ENCODE measurements at regions of chr18 and their contacts with region 1.

Region 1: DNA sequence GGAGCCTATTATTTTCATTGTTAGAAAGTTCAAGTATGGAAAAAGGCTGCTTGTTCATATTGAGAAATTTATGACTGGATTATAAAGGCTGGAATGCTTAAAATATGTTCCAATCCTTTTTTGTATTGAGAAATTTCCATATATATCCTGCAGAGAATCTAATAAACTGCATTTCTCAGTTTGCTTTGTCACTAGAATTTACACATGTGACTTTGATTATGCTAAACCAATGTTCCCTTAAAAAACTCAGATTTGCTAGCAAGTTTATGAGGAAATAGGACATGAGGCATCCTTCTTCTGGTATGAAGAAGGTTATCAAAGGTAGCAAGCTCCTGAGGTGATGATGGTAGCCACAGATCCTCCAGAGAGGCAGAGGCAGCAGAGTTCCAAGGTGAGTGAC is 29.2 kb upstream of the DSEL start:
- DNase-seq: no peak
- H3K4me3 ChIP-seq: no peak overlapping the region
- H3K27ac ChIP-seq: no peak overlapping the region
- H3K27me3 ChIP-seq: no peaks in the 10 kb centered on the region
- CTCF ChIP-seq: no peak

Region 2: GRCh38 chr18:67568166-67568565 is 22.5 kb after region 1 on chr18:
- CTCF ChIA-PET with region 1: no interaction called
- POLR2A ChIA-PET with region 1: no interaction called
- DNase-seq: no peak
- H3K4me3 ChIP-seq: no peak overlapping the region
- H3K27ac ChIP-seq: no peak overlapping the region
- H3K27me3 ChIP-seq: no peaks in the 10 kb centered on the region
- CTCF ChIP-seq: no peak

Region 3: DNA sequence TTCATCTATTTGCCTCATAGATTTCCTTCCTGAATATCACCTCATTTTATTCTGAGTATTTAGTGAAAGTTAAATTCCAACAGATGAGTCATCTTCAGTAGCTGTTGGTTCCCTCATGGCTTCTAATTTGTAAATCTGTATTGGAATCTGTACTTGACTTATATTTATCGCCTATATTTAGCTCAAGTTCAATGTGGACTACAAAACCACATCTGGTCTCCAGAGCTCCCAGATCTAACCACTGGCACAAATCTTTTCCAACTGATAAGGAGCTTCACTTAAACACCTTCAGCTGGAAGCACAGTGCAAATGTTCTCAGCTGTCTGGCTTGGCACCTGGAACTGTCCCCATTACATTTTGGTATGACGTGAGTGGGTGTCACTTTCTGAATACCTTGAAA is 53.6 kb after region 1 on chr18:
- CTCF ChIA-PET with region 1: no interaction called
- POLR2A ChIA-PET with region 1: interaction called, 11 read pairs
- DNase-seq: peak; percentile 18
- H3K4me3 ChIP-seq: no peak overlapping the region
- H3K27ac ChIP-seq: peak overlapping the region; percentile 31
- H3K27me3 ChIP-seq: no peaks in the 10 kb centered on the region
- CTCF ChIP-seq: no peak